HEK293 (cell line): ENCODE measurements at regions of chr19 and their contacts with region 1.

Region 1: GRCh38 chr19:44570984-44571684 is 41.7 kb upstream of the CEACAM20 start:
- H3K4me3 ChIP-seq: no peak overlapping the region
- H3K27ac ChIP-seq: no peak overlapping the region
- H3K4me1 ChIP-seq: no peaks in the 10 kb centered on the region
- CTCF ChIP-seq: no peak

Region 2: GRCh38 chr19:42985618-42986017 is 1585.5 kb before region 1 on chr19:
- CTCF ChIA-PET with region 1: no interaction called
- POLR2A ChIA-PET with region 1: no interaction called
- H3K4me3 ChIP-seq: no peak overlapping the region
- H3K27ac ChIP-seq: no peak overlapping the region
- H3K4me1 ChIP-seq: no peaks in the 10 kb centered on the region
- CTCF ChIP-seq: no peak

Region 3: GRCh38 chr19:44582581-44583265 is 11.6 kb after region 1 on chr19:
- CTCF ChIA-PET with region 1: interaction called, 31 read pairs
- POLR2A ChIA-PET with region 1: no interaction called
- H3K4me3 ChIP-seq: no peak overlapping the region
- H3K27ac ChIP-seq: no peak overlapping the region
- H3K4me1 ChIP-seq: no peaks in the 10 kb centered on the region
- CTCF ChIP-seq: peak; percentile 53; the same call in 1 of the 2 replicates

Region 4: DNA sequence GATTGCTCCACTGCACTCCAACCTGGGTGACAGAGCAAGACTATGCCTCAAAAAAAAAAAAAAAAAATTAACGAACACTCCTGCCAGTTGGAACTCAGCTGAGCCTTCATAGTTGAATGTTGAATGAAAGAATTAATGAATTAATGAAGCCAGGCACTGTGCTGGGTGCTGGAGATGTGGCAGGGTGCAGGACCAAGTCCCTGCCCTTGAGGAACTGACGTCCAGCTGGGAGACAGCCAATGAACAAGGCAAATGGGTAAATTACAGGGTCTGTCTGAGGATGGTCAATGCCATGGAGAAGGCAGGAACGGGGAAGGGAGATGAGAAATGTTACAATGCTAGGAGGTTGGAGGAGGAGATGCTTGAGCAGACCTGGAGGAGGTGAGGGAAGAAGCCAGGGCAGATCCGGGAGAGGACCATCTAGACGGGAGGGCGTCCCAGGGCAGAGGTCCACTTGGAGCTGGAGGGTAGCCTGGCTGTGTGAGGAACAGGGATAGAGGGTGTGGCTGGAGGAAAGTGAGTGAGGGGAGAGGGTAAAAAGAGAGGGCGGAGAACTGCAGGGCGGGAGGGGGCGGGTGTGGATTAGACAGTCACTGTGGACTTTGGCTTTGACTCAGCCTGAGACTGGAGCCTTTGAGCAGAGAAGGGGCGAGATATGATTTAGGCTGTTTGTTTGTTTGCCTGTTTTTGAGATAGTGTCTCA is 25.4 kb after region 1 on chr19:
- CTCF ChIA-PET with region 1: interaction called, 11 read pairs
- POLR2A ChIA-PET with region 1: no interaction called
- H3K4me3 ChIP-seq: no peak overlapping the region
- H3K27ac ChIP-seq: no peak overlapping the region
- H3K4me1 ChIP-seq: no peaks in the 10 kb centered on the region
- CTCF ChIP-seq: no peak

Region 5: GRCh38 chr19:44657211-44657921 is 86.2 kb after region 1 on chr19:
- CTCF ChIA-PET with region 1: interaction called, 52 read pairs
- POLR2A ChIA-PET with region 1: interaction called, 3 read pairs
- H3K4me3 ChIP-seq: no peak overlapping the region
- H3K27ac ChIP-seq: no peak overlapping the region
- H3K4me1 ChIP-seq: no peaks in the 10 kb centered on the region
- CTCF ChIP-seq: peak; percentile 92